ENCODE measurements at regions of chr15 and their contacts with region 1.

Region 1: DNA sequence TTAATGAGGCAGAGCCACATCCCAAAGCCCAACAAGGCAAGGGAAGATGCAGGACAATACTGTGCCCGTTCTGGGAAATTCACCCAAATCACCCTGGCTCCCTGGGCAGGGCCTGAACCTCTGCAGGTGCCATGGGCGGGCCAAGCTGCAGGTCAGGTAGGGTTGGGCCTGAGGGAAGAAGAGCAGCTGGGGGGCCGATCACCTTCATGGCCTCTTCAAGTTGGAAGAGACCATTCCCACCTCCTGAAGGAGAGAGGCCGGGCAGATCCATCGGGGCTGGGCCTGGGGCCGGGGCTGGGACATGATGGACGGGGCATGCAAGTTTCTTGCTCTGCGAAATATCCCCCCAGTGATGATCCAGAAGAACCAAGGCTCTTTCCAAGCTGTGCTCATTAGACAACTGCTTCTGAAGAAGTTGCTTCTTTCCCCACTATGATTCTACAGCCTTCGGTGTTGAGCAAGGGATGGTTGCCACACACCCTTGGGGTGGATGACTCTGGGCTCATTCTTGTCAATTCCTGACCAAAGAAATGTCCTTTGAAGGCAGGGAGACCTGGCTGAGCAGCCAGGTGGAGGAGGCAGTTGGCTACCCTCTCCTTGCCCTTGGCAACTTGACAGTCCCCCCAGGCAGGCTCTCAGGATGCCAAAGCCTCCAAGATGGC is 38.2 kb downstream of the KLHL25 start:
- DNase-seq: peak in 2 of 5 donors; percentile 14 to 17
- ATAC-seq: no peak
- H3K4me3 ChIP-seq: no peak overlapping the region
- H3K27ac ChIP-seq: no peak overlapping the region
- H3K4me1 ChIP-seq: peaks cover 0 to 68% (median 25%) of the 10 kb centered on the region in 12 donors
- H3K27me3 ChIP-seq: no peaks in the 10 kb centered on the region
- CTCF ChIP-seq: no peak
- POLR2A ChIP-seq: no peak

Region 2: DNA sequence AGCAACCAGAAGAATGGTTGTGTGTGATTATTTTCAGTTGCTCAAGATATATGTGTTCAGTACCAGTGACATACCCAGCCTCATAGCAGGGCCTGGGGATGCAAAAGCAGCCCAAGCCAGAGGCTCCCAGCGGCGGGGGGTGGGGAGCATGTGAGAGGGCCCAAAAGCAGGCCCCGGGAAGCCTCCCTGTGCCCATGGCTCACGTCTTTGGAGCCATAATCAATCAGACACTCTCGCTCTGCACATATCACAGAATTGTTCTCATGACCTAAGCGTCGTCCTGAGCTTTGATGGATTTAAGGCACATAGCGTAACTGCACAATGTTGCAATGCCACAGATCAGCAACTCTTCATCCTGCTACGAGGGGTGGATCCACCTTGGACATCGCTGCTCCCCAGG is 17.4 kb after region 1 on chr15:
- intact Hi-C with region 1: loop called in 1 of 10 experiments (anchors 2 kb)
- DNase-seq: no peak
- ATAC-seq: no peak
- H3K4me3 ChIP-seq: no peak overlapping the region
- H3K27ac ChIP-seq: no peak overlapping the region
- H3K4me1 ChIP-seq: peaks cover 0 to 52% (median 35%) of the 10 kb centered on the region in 12 donors
- H3K27me3 ChIP-seq: no peaks in the 10 kb centered on the region
- CTCF ChIP-seq: no peak
- POLR2A ChIP-seq: no peak

Region 3: DNA sequence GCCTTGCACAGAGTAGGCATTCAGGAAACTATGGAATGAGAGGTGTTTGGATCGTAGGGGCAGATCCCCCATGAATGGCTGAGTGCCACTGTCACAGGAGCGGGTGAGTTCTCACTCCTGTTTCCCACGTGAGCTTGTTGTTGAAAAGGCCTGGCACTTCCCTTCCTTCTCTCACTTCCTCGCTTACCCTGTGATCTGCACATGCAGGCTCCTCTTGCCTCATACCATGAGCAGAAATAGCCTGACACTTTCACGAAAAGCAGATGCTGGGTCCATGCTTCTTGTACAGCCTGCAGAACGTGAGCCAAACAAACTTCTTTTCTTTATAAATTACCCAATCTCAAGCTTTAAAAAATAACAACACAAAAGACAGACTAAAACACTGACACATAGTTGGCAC is 378.5 kb after region 1 on chr15:
- intact Hi-C with region 1: no loop called
- DNase-seq: peak in 2 of 5 donors; percentile 5 to 29
- ATAC-seq: peak in 3 of 4 donors; percentile 18 to 62 (median 60)
- H3K4me3 ChIP-seq: no peak overlapping the region
- H3K27ac ChIP-seq: no peak overlapping the region
- H3K4me1 ChIP-seq: no peaks in the 10 kb centered on the region
- H3K27me3 ChIP-seq: no peaks in the 10 kb centered on the region
- CTCF ChIP-seq: no peak
- POLR2A ChIP-seq: no peak

Measured in heart left ventricle (tissue), 16 donors.